CD8-positive, alpha-beta memory T cell (primary cell): ENCODE measurements at regions of chr16 and their contacts with region 1.

Region 1: GRCh38 chr16:17194190-17194780 is 276.5 kb downstream of the XYLT1 start:
- DNase-seq: peak; percentile 28 to 65 (median 32)
- H3K4me3 ChIP-seq: no peak overlapping the region
- H3K4me3 Mint-ChIP-seq: no peak overlapping the region
- H3K27ac ChIP-seq: no peak overlapping the region
- H3K27ac Mint-ChIP-seq: no peak overlapping the region
- H3K4me1 ChIP-seq: no peaks in the 10 kb centered on the region
- H3K4me1 Mint-ChIP-seq: peaks cover 0 to 8% (median 2%) of the 10 kb centered on the region in 3 donors
- H3K27me3 ChIP-seq: no peaks in the 10 kb centered on the region
- H3K27me3 Mint-ChIP-seq: no peaks in the 10 kb centered on the region

Region 2: GRCh38 chr16:16982614-16983013 is 211.7 kb before region 1 on chr16:
- CTCF ChIA-PET with region 1: no interaction called
- POLR2A ChIA-PET with region 1: no interaction called
- DNase-seq: no peak
- H3K4me3 ChIP-seq: no peak overlapping the region
- H3K4me3 Mint-ChIP-seq: no peak overlapping the region
- H3K27ac ChIP-seq: no peak overlapping the region
- H3K27ac Mint-ChIP-seq: no peak overlapping the region
- H3K4me1 ChIP-seq: no peaks in the 10 kb centered on the region
- H3K4me1 Mint-ChIP-seq: peaks cover 12 to 13% (median 13%) of the 10 kb centered on the region in 3 donors
- H3K27me3 ChIP-seq: no peaks in the 10 kb centered on the region
- H3K27me3 Mint-ChIP-seq: no peaks in the 10 kb centered on the region

Region 3: DNA sequence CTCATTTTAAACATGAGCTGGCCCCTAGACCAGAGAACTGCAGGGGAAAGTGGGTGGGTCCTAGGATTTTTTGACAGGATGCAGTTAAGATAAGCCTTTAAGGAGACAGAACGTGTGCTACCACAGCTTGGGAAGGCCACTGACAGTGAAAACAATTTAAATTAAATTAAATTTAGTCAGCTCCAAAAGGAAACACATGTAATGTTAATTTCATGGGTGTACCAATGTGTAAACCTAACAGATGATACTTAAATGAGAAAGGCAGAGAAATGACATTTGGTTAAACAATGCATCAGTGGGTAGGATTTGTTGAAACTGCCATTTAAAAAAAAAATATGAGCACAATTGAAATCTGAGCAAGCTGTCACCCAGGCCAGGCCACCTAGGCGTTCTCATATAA is 25.7 kb after region 1 on chr16:
- CTCF ChIA-PET with region 1: no interaction called
- POLR2A ChIA-PET with region 1: no interaction called
- DNase-seq: no peak
- H3K4me3 ChIP-seq: no peak overlapping the region
- H3K4me3 Mint-ChIP-seq: no peak overlapping the region
- H3K27ac ChIP-seq: no peak overlapping the region
- H3K27ac Mint-ChIP-seq: no peak overlapping the region
- H3K4me1 ChIP-seq: no peaks in the 10 kb centered on the region
- H3K4me1 Mint-ChIP-seq: peaks cover 8 to 14% (median 13%) of the 10 kb centered on the region in 3 donors
- H3K27me3 ChIP-seq: no peaks in the 10 kb centered on the region
- H3K27me3 Mint-ChIP-seq: no peaks in the 10 kb centered on the region

Region 4: DNA sequence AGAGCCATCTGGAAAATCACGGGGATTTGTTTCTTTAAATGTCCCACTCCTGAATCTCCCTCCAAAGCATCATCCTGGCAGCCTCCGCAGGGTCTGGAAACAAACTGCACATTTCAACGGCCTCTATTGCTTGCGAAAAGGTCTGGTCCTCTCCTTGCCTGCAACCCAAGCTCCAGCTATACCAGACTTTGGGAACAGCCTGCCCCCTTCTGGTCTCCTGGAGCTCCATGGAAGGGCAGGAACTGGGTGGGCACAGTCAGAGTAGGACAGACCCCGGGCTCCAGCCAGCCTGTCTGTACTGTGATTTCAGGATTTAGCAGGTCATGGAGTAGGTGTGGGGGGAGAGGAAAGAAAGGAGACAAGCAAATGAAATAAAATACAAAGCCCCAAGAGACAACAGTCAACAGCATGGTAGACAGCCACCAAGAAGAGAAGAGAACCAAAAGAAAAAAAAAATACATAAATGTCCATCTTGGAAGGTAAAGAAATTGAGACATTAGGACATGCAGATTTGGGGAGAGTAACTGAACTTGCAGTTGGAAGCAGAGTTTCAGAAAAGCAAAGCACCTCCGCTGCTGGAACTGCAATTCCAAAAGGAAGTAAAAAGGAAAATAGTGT is 273.7 kb after region 1 on chr16:
- CTCF ChIA-PET with region 1: interaction called, 13 read pairs
- POLR2A ChIA-PET with region 1: no interaction called
- DNase-seq: peak in 2 of 5 donors; percentile 37 to 62
- H3K4me3 ChIP-seq: no peak overlapping the region
- H3K4me3 Mint-ChIP-seq: peak overlapping the region; percentile 57 to 98 (median 97)
- H3K27ac ChIP-seq: no peak overlapping the region
- H3K27ac Mint-ChIP-seq: peak overlapping the region in 7 of 8 donors; percentile 7 to 95 (median 26)
- H3K4me1 ChIP-seq: peaks cover 26% of the 10 kb centered on the region
- H3K4me1 Mint-ChIP-seq: peaks cover 44 to 56% (median 56%) of the 10 kb centered on the region in 3 donors
- H3K27me3 ChIP-seq: no peaks in the 10 kb centered on the region
- H3K27me3 Mint-ChIP-seq: peaks cover 0 to 2% of the 10 kb centered on the region in 2 donors

Region 5: GRCh38 chr16:17578921-17579874 is 384.9 kb after region 1 on chr16:
- CTCF ChIA-PET with region 1: interaction called, 12 read pairs
- POLR2A ChIA-PET with region 1: no interaction called
- DNase-seq: peak; percentile 32 to 61 (median 47)
- H3K4me3 ChIP-seq: no peak overlapping the region
- H3K4me3 Mint-ChIP-seq: no peak overlapping the region
- H3K27ac ChIP-seq: no peak overlapping the region
- H3K27ac Mint-ChIP-seq: peak overlapping the region in 2 of 8 donors; percentile 22 to 59
- H3K4me1 ChIP-seq: no peaks in the 10 kb centered on the region
- H3K4me1 Mint-ChIP-seq: peaks cover 0 to 4% (median 4%) of the 10 kb centered on the region in 3 donors
- H3K27me3 ChIP-seq: no peaks in the 10 kb centered on the region
- H3K27me3 Mint-ChIP-seq: peaks cover 3 to 5% of the 10 kb centered on the region in 2 donors